A549 (cell line): ENCODE measurements at regions of chr22 and their contacts with region 1.

Region 1: DNA sequence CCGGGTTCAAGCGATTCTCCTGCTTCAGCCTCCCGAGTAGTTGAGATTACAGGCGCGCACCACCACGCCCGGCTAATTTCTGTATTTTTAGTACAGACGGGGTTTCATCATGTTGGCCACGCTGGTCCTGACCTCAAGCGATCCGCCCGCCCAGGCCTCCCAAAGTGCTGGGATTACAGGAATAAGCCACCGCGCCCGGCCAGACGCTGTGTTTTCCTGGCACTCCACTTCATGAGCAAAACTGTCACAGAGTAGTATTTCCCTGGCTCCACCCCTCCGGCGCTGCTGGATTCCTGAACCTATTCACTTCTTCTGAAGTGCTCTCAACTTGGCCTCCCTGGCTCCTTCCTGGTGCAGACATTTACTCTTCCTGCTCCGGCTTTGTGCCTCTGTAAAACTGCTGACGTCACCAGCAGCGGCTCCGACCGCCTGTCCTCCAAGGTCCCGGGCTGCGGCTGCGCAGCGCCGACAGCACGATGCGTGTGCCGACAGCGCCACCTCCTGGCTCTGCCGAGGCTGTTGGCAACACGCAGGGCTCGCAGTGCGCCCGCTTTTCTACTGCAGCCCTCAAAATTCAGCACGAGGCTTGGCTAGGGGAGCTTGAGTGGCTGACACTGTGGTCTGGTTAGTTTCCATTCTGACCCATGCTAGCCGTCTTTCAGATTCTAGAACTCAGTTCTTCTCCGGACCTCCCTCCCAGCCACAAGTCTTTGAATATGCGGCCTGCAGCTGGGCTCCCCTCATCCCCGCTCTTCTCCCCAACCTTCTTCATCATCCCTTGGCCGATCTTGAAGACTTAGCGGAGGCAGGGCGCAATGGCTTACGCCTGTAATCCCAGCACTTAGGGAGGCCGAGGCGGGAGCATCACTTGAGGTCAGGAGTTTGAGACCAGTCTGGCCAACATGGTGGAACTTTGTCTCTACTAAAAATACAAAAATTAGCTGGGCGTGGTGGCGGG is 36.6 kb downstream of the APOL3 start:
- DNase-seq: peak; percentile 62 to 93
- ATAC-seq: peak; percentile 97 to 99
- H3K4me3 ChIP-seq: no peak overlapping the region
- H3K27ac ChIP-seq: peak overlapping the region; percentile 77 to 90
- H3K4me1 ChIP-seq: peaks cover 6% of the 10 kb centered on the region
- CTCF ChIP-seq: peak; percentile 87
- EP300 ChIP-seq: no peak
- POLR2A ChIP-seq: peak; percentile 30; the same call in 1 of the 2 replicates
- RAD21 ChIP-seq: peak; percentile 93 to 98

Region 2: DNA sequence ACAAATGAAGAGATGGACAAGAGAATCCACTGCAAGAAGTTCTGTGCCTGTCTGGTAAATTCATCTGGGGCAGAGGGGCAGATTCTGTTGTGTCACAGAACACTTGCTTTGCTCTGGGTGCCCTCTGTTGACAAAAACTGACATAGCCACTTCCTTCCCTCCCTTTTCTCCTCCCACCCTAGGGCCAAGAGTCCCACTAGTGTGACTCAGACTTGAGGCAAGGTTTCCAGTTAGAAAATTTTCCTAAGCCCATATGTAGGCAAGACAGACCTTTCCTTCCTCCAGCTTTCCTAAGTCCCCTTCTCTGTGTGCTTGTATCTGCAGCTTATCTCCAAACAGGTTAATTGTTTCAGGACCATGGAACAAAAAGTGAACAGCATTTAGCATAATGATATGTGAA is 202.2 kb before region 1 on chr22:
- CTCF ChIA-PET with region 1: interaction called, 13 read pairs
- POLR2A ChIA-PET with region 1: no interaction called
- DNase-seq: peak; percentile 31 to 83
- ATAC-seq: peak; percentile 98 to 99
- H3K4me3 ChIP-seq: no peak overlapping the region
- H3K27ac ChIP-seq: peak overlapping the region; percentile 66 to 72; a peak in 5 of 6 replicates
- H3K4me1 ChIP-seq: peaks cover 25% of the 10 kb centered on the region
- CTCF ChIP-seq: peak; percentile 75
- EP300 ChIP-seq: no peak
- POLR2A ChIP-seq: no peak
- RAD21 ChIP-seq: peak; percentile 86 to 87

Region 3: GRCh38 chr22:35930933-35931332 is 193.0 kb before region 1 on chr22:
- CTCF ChIA-PET with region 1: interaction called, 18 read pairs
- POLR2A ChIA-PET with region 1: no interaction called
- DNase-seq: peak; percentile 29 to 69
- ATAC-seq: peak; percentile 85 to 88; a peak in 5 of 6 replicates
- H3K4me3 ChIP-seq: no peak overlapping the region
- H3K27ac ChIP-seq: no peak overlapping the region
- H3K4me1 ChIP-seq: no peaks in the 10 kb centered on the region
- CTCF ChIP-seq: peak; percentile 56
- EP300 ChIP-seq: no peak
- POLR2A ChIP-seq: no peak
- RAD21 ChIP-seq: peak; percentile 65 to 72

Region 4: DNA sequence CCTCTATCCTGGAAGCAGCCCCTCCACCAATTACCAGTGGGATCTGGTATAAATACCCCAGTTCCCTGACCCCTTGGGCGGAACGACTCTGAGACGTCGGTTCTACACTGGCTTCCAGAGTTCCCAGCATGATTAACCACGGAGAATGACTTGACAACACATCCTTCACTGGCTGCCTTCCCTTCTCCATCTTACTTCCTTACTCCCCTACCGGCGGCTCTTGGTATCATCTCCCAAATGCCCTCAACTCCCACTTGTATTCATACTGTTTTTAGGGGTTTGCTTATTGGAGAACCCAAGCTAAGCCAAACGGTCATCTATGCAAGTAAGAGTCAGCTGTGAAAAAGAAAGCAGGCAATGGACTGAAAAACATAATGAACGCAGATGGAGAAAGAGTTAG is 19.5 kb before region 1 on chr22:
- CTCF ChIA-PET with region 1: no interaction called
- POLR2A ChIA-PET with region 1: no interaction called
- DNase-seq: no peak
- ATAC-seq: no peak
- H3K4me3 ChIP-seq: no peak overlapping the region
- H3K27ac ChIP-seq: no peak overlapping the region
- H3K4me1 ChIP-seq: no peaks in the 10 kb centered on the region
- CTCF ChIP-seq: no peak
- EP300 ChIP-seq: no peak
- POLR2A ChIP-seq: no peak
- RAD21 ChIP-seq: no peak

Region 5: DNA sequence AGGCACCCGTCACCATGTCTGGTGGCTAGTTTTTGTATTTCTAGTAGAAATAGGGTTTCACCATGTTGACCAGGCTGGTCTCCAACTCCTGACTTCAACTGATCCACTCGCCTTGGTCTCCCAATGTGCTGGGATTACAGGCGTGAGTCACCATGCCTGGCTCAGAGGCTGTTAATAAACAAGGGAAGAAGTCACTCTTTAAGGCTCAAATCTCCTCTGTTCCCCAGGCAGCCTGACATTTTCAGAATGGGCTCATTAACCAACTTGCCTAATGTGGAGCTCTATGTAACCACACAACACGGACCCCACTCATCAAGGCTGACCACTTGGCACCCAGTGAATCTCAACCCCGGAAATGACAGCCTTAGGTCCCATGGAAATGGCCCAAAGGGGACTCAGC is 12.5 kb after region 1 on chr22:
- CTCF ChIA-PET with region 1: interaction called, 17 read pairs
- POLR2A ChIA-PET with region 1: no interaction called
- DNase-seq: no peak
- ATAC-seq: no peak
- H3K4me3 ChIP-seq: no peak overlapping the region
- H3K27ac ChIP-seq: no peak overlapping the region
- H3K4me1 ChIP-seq: no peaks in the 10 kb centered on the region
- CTCF ChIP-seq: no peak
- EP300 ChIP-seq: no peak
- POLR2A ChIP-seq: no peak
- RAD21 ChIP-seq: no peak